Caco-2 (cell line): ENCODE measurements at regions of chr5 and their contacts with region 1.

Region 1: GRCh38 chr5:94693043-94693822 is 74.8 kb downstream of the SLF1 start:
- DNase-seq: peak in 1 of 2 experiments; percentile 19
- H3K4me3 ChIP-seq: no peak overlapping the region
- H3K4me3 Mint-ChIP-seq: no peak overlapping the region
- H3K27ac Mint-ChIP-seq: no peak overlapping the region
- H3K4me1 ChIP-seq: no peaks in the 10 kb centered on the region
- H3K4me1 Mint-ChIP-seq: no peaks in the 10 kb centered on the region
- H3K27me3 ChIP-seq: no peaks in the 10 kb centered on the region
- H3K27me3 Mint-ChIP-seq: no peaks in the 10 kb centered on the region
- CTCF ChIP-seq: peak; percentile 38 to 49

Region 2: DNA sequence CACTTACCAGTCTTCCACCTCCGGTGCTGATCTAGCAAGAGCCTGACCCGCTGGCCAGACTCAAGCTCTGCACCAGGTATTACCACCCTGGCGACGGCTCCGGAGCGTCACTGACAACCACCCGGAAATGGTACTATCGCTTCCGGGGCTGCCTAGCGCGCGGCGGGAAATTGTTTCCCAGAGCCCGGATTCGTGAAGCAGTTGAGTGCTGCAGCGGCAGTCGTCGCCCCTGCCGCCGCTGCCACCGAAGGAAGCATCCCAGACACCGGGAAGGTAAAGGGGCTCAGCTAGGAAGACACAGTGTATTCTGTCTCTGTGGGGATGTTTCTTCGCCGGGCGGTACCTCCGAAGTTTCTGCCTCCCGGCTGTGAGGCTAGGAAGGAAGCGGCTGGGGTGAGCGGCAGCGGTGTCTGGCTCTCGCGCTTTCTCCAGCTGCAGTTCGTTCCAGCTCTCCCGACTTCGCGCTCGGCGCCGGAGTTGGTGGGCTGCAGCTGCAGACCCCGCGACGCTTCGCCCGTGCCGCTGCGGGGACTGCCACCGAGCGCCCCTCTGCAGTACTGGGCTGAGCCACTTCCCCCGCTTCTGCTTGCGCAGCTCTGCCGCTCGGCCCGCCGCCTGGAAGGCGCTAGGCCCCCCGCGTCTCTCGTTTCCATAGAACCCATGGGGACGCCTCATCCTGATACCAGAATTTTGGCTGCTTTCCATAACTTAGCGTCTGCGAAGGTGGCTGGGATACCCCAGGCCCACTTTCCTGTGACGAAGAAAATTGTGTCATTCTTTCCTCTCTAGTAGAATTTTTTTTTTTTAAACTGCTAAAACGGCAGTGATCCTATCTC is 74.5 kb before region 1 on chr5 and contains the starts of genes KIAA0825 and SLF1:
- CTCF ChIA-PET with region 1: no interaction called
- POLR2A ChIA-PET with region 1: no interaction called
- intact Hi-C with region 1: loop called (anchors 2 kb)
- DNase-seq: peak; percentile 89
- H3K4me3 ChIP-seq: peak within 1 kb of the TSS; percentile 82
- H3K4me3 Mint-ChIP-seq: peak within 1 kb of the TSS; percentile 82
- H3K27ac Mint-ChIP-seq: peak within 1 kb of the TSS; percentile 96
- H3K4me1 ChIP-seq: peaks cover 10% of the 10 kb centered on the region; the same call in 1 of the 2 replicates
- H3K4me1 Mint-ChIP-seq: no peaks in the 10 kb centered on the region
- H3K27me3 ChIP-seq: no peaks in the 10 kb centered on the region
- H3K27me3 Mint-ChIP-seq: no peaks in the 10 kb centered on the region
- CTCF ChIP-seq: no peak
- total RNA-seq, gene KIAA0825: 0.26 and 0.50 TPM in 2 replicates
- total RNA-seq, gene SLF1: 7.9 and 11.7 TPM in 2 replicates